PC-3 (cell line): ENCODE measurements at regions of chr6 and their contacts with region 1.

Region 1: DNA sequence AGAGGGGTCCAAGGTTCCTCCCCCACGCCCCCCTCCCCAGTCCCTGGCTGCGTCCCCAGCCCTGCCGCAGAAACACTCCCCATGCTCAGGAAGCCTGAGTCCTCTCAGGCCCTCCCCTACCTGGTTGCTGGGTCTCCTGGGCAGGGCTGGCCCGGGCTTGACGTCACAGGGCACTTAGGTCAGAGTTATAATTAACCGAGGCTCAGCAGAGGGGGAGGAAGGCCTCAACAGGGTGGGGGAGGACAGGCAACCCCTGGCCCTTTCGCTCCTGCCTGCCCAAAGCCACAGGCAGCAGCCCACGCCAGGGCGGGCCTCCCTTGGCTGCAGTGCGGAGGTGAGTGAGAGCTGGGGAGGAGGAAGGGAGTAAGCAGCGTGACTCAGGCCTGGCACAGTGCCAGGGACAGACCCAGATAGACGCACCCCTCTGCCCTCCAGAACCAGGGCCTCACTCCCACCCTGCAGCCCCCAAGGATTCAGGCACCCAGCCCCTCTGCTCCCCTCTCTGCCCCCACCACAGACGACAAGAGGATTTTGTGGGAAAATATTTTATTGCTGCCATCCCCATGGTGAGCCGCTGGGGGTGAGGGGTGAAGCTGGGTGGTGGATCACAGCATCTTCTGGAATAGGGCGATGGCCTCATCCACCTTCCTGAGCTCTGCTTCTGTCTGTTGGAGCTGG is at the start of gene VWA7:
- DNase-seq: peak; percentile 88
- ATAC-seq: peak; percentile 79
- H3K4me3 ChIP-seq: peak within 1 kb of the TSS; percentile 43
- H3K27ac ChIP-seq: peak within 1 kb of the TSS; percentile 69
- H3K4me1 ChIP-seq: peaks cover 29% of the 10 kb centered on the region
- H3K27me3 ChIP-seq: no peaks in the 10 kb centered on the region
- CTCF ChIP-seq: no peak
- total RNA-seq, gene VWA7: 0.98 and 1.9 TPM in 2 replicates

Region 2: GRCh38 chr6:31862344-31863227 is 85.5 kb after region 1 on chr6 and contains the start of gene NEU1:
- CTCF ChIA-PET with region 1: no interaction called
- POLR2A ChIA-PET with region 1: no interaction called
- intact Hi-C with region 1: loop called (anchors 2 kb)
- DNase-seq: peak; percentile 100
- ATAC-seq: peak; percentile 96
- H3K4me3 ChIP-seq: peak within 1 kb of the TSS; percentile 79
- H3K27ac ChIP-seq: peak within 1 kb of the TSS; percentile 77
- H3K4me1 ChIP-seq: peaks cover 5% of the 10 kb centered on the region; the same call in 1 of the 2 replicates
- H3K27me3 ChIP-seq: no peaks in the 10 kb centered on the region
- CTCF ChIP-seq: no peak
- total RNA-seq, gene NEU1: 31.7 and 33.1 TPM in 2 replicates